ENCODE measurements at regions of chr1 and their contacts with region 1.

Region 1: DNA sequence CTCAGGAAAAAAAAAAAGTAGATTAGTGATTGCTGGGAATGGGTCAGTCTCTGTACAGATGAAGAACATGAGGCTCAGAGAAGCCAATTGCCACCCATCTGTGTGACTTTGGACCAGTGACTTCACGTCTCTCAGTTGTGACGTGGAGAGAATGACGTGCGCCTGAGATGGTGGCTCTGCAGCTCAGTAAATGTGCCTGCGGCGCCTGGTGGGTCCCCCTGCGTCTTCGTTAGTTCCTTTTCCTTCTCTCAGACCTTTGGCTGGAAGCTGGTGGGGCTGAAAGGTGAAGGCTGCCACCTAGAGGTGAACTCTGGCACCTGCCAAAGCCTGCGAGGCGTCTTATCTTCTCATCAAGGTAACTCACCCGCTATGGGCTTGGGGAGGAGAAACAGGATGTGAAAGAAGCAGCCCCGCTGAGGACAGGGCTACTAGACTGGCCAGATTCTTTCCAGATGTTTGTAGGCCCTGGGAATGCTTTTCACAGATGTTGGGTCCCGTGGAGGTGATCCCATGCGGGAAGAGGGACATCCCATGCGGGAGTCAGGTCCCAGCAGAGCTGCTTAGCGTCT is 8.7 kb upstream of the E2F2 start:
- DNase-seq: peak; percentile 69 to 91 (median 84)
- H3K4me3 ChIP-seq: peak overlapping the region in 49 of 59 donors; percentile 1 to 53 (median 28)
- H3K27ac ChIP-seq: peak overlapping the region in 1 of 59 donors; percentile 32
- H3K27me3 ChIP-seq: no peaks in the 10 kb centered on the region
- CTCF ChIP-seq: peak; percentile 76 to 98 (median 93)

Region 2: GRCh38 chr1:23098463-23099170 is 441.2 kb before region 1 on chr1:
- intact Hi-C with region 1: loop called in 1 of 2 experiments (anchors 5 kb)
- DNase-seq: peak in 8 of 10 donors; percentile 43 to 72 (median 52)
- H3K4me3 ChIP-seq: peak overlapping the region in 12 of 59 donors; percentile 7 to 32 (median 19)
- H3K27ac ChIP-seq: peak overlapping the region in 22 of 59 donors; percentile 3 to 69 (median 44)
- H3K27me3 ChIP-seq: no peaks in the 10 kb centered on the region
- CTCF ChIP-seq: peak; percentile 85 to 99 (median 96)

Region 3: DNA sequence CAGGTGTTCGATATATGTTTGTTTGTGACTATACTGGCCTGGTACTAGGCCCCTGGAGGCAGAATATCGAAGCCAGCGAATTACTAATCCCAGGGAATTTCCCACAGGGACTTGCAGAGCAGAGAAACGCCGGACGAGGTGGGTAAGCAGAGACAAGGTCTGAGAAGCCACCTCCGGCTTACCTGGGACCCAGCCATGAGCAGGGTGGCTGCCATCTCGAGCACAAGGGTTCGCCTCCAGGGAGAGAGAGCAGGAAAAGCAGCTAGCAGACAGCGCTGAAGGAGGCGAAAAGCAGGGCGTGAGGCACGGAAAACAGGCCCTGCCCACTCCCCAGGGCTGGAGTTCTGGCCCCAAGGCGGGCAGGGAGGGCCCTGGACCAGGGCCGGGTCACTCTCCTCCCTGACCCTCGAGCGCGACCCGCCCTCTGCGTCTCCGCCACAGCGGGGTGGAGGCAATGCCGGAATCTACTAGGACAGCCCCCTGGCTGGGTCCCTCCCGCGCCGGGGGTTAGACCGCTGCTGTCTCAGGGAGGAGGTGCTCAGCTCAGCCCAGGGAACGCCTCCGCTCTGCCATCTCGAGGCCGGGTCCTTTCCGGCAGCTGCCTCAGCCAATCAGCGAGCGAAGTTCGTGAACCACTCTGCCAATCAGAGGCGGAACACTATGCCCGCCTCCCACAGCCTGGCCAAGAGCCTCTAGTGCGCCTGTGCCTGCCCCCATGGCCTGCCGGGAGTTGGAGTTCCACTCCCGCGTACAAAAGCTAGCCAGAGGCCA is 171.8 kb before region 1 on chr1:
- intact Hi-C with region 1: loop called (anchors 5 to 10 kb)
- DNase-seq: peak; percentile 98 to 99 (median 99)
- H3K4me3 ChIP-seq: peak overlapping the region; percentile 68 to 100 (median 93)
- H3K27ac ChIP-seq: peak overlapping the region; percentile 92 to 100 (median 99)
- H3K27me3 ChIP-seq: no peaks in the 10 kb centered on the region
- CTCF ChIP-seq: peak in 43 of 56 donors; percentile 11 to 58 (median 35)

Region 4: GRCh38 chr1:23496490-23497181 is 43.1 kb before region 1 on chr1:
- intact Hi-C with region 1: loop called (anchors 2 to 5 kb)
- DNase-seq: no peak
- H3K4me3 ChIP-seq: no peak overlapping the region
- H3K27ac ChIP-seq: no peak overlapping the region
- H3K27me3 ChIP-seq: no peaks in the 10 kb centered on the region
- CTCF ChIP-seq: no peak

Region 5: GRCh38 chr1:23634842-23635651 is 95.3 kb after region 1 on chr1:
- intact Hi-C with region 1: loop called (anchors 1 to 2 kb)
- DNase-seq: peak in 6 of 10 donors; percentile 13 to 61 (median 38)
- H3K4me3 ChIP-seq: peak overlapping the region in 58 of 59 donors; percentile 6 to 66 (median 47)
- H3K27ac ChIP-seq: peak overlapping the region in 52 of 59 donors; percentile 10 to 90 (median 68)
- H3K27me3 ChIP-seq: no peaks in the 10 kb centered on the region
- CTCF ChIP-seq: peak; percentile 71 to 96 (median 90)

Region 6: DNA sequence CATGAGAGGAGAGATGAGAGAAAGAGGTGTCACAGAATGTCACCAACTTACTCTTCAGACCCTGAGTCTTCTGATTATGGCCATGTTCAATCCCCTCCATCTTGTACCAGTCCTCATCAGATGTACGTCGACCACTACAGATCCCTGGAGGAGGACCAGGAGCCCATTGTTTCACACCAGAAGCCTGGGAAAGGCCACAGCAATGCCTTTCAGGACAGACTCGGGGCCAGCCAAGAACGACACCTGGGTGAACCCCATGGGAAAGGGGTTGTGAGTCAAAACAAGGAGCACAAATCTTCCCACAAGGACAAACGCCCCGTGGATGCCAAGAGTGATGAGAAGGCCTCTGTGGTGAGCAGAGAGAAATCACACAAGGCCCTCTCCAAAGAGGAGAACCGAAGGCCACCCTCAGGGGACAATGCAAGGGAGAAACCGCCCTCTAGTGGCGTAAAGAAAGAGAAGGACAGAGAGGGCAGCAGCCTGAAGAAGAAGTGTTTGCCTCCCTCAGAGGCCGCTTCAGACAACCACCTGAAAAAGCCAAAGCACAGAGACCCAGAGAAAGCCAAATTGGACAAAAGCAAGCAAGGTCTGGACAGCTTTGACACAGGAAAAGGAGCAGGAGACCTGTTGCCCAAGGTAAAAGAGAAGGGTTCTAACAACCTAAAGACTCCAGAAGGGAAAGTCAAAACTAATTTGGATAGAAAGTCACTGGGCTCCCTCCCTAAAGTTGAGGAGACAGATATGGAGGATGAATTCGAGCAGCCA is 211.4 kb after region 1 on chr1:
- intact Hi-C with region 1: loop called in 1 of 2 experiments (anchors 5 kb)
- DNase-seq: peak in 1 of 10 donors; percentile 18
- H3K4me3 ChIP-seq: no peak overlapping the region
- H3K27ac ChIP-seq: peak overlapping the region in 16 of 59 donors; percentile 11 to 59 (median 28)
- H3K27me3 ChIP-seq: no peaks in the 10 kb centered on the region
- CTCF ChIP-seq: peak in 54 of 56 donors; percentile 22 to 63 (median 48)

Region 7: GRCh38 chr1:24266398-24266941 is 726.7 kb after region 1 on chr1:
- intact Hi-C with region 1: no loop called
- DNase-seq: no peak
- H3K4me3 ChIP-seq: no peak overlapping the region
- H3K27ac ChIP-seq: no peak overlapping the region
- H3K27me3 ChIP-seq: no peaks in the 10 kb centered on the region
- CTCF ChIP-seq: no peak

Measured in dorsolateral prefrontal cortex (tissue), 120 donors.